ENCODE measurements at regions of chr7 and their contacts with region 1.

Region 1: DNA sequence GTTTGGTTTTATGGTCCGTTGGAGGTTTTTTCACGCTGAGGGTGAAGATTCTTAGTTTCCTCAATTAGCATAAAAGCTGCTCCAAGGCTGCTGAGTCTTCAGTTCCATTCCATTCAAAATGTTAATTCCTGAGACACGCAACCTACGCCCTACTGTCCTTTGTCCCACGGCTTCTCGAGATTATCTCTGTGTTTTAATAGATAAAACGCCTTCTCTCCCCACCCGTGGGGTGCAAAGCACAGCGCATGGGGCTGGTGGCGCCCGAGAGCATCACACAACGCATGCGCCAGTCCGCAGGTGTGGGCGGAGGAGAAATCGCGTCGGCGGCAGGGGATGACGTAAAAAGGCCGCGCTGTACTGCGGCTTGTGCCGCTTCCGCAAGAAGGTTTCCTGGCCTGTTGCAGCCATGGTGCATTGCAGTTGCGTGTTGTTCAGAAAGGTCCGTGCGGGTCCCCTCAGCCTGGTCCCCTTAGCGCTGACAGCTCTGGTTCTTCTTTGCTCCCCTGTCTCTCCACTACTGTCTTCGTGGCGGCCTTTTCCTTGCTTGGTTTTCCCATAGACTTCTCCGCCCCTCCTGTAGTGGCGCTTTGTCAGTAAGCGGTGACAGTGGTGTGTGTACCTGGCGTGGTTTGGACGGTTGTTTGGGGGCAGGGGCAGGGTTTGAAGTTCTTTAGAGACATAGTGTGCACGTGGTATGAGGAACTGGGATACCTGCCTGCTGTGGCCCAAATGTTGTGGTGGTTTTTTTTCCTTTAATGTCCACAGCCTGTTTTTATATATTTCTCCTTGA is at the start of gene GTPBP10:
- DNase-seq: peak; percentile 96
- H3K4me3 ChIP-seq: peak within 1 kb of the TSS; percentile 81
- H3K27ac ChIP-seq: peak within 1 kb of the TSS; percentile 82
- H3K4me1 ChIP-seq: no peaks in the 10 kb centered on the region
- H3K27me3 ChIP-seq: no peaks in the 10 kb centered on the region
- CTCF ChIP-seq: peak; percentile 61
- total RNA-seq, gene GTPBP10: 20.1 to 28.6 TPM

Region 2: GRCh38 chr7:89837515-89837914 is 509.0 kb before region 1 on chr7:
- intact Hi-C with region 1: no loop called
- DNase-seq: no peak
- H3K4me3 ChIP-seq: no peak overlapping the region
- H3K27ac ChIP-seq: no peak overlapping the region
- H3K4me1 ChIP-seq: no peaks in the 10 kb centered on the region
- H3K27me3 ChIP-seq: no peaks in the 10 kb centered on the region
- CTCF ChIP-seq: no peak

Region 3: GRCh38 chr7:90403174-90404113 is 56.9 kb after region 1 on chr7 and contains the start of gene CLDN12:
- intact Hi-C with region 1: loop called (anchors 5 kb)
- DNase-seq: peak; percentile 94
- H3K4me3 ChIP-seq: peak within 1 kb of the TSS; percentile 43
- H3K27ac ChIP-seq: peak within 1 kb of the TSS; percentile 71
- H3K4me1 ChIP-seq: no peaks in the 10 kb centered on the region
- H3K27me3 ChIP-seq: no peaks in the 10 kb centered on the region
- CTCF ChIP-seq: no peak
- total RNA-seq, gene CLDN12: 52.5 to 65.6 TPM

Measured in colonic mucosa (tissue), 4 donors.